CD8-positive, alpha-beta T cell (primary cell): ENCODE measurements at regions of chr15 and their contacts with region 1.

Region 1: DNA sequence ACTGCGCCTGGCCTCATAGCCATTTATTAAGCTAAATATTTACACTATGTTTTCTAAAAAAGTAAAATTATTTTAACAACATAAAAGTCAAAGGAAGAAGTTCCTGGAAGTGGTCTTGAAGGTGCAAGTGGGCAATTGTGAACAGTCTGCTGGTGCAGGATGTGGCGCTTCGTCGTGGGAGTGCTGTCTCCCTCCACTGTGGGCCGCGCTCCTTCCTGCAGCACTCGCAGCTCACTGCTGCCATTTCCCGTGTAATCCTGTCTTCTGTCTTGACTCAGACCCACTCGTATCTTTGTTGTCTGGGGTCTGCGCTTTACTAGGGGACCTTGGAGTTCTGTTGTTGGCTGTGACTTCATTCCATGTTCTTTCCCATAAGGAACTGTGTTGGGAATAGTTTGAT is 56.3 kb downstream of the APBA2 start:
- DNase-seq: peak in 8 of 9 experiments; percentile 34 to 84 (median 66)
- ATAC-seq: peak; percentile 74
- H3K4me3 ChIP-seq: peak overlapping the region; percentile 10 to 28
- H3K4me3 Mint-ChIP-seq: peak overlapping the region; percentile 59
- H3K27ac ChIP-seq: peak overlapping the region; percentile 4 to 54
- H3K27ac Mint-ChIP-seq: peak overlapping the region; percentile 92
- H3K4me1 ChIP-seq: peaks cover 91% of the 10 kb centered on the region
- H3K4me1 Mint-ChIP-seq: peaks cover 87% of the 10 kb centered on the region
- H3K27me3 ChIP-seq: no peaks in the 10 kb centered on the region
- H3K27me3 Mint-ChIP-seq: no peaks in the 10 kb centered on the region
- CTCF ChIP-seq: no peak

Region 2: DNA sequence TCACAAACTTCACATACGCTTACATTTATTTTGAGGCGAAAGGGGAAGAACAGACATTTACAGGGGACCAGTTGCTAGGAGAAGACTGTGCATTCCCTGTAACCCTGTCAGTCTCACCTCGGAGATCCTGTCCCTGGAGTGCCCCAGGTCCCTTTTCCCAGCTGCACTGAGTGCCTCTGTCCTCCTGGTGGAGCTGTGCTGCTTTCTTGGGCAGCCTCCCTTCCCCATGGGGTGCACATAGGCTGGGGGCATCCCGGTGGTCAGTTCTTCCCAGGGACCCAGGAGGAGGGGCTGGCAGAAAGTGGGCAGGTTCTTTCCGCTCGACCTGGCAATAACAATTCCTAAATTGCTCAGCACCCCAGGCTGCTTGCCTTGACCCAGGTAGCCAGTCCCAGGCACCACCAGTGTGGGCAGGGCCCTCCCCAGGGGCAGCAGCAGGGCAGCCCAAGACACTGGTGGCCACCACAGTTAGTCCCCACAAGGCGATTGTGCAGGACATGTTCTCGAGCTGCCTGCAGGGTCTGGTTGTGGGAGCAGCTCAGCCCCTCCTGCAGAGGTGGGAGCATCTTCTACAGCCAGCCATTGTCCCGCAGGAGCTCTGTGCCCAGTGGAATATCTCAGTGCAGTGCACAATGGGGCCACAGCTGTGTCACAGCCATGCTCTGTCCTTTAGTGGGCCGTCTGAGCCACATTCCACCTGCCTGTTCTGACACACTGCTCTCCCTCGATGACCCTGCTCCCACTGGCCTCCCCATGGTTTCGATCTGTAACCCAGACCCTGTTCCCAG is 19.9 kb before region 1 on chr15:
- CTCF ChIA-PET with region 1: interaction called, 7 read pairs
- POLR2A ChIA-PET with region 1: interaction called, 4 read pairs
- intact Hi-C with region 1: loop called in 1 of 2 experiments (anchors 2 kb)
- DNase-seq: peak in 1 of 9 experiments; percentile 30
- ATAC-seq: no peak
- H3K4me3 ChIP-seq: peak overlapping the region in 1 of 2 experiments; percentile 4
- H3K4me3 Mint-ChIP-seq: peak overlapping the region; percentile 79
- H3K27ac ChIP-seq: peak overlapping the region in 1 of 2 experiments; percentile 60
- H3K27ac Mint-ChIP-seq: peak overlapping the region; percentile 86
- H3K4me1 ChIP-seq: peaks cover 72% of the 10 kb centered on the region
- H3K4me1 Mint-ChIP-seq: peaks cover 81% of the 10 kb centered on the region
- H3K27me3 ChIP-seq: no peaks in the 10 kb centered on the region
- H3K27me3 Mint-ChIP-seq: no peaks in the 10 kb centered on the region
- CTCF ChIP-seq: no peak